Calu3 (cell line): ENCODE measurements at regions of chr6 and their contacts with region 1.

Region 1: GRCh38 chr6:132391391-132392271 is 9.6 kb downstream of the MOXD1 start:
- DNase-seq: no peak
- H3K4me3 Mint-ChIP-seq: no peak overlapping the region
- H3K27ac Mint-ChIP-seq: no peak overlapping the region
- H3K4me1 Mint-ChIP-seq: peaks cover 26% of the 10 kb centered on the region
- H3K27me3 Mint-ChIP-seq: no peaks in the 10 kb centered on the region
- CTCF ChIP-seq: no peak

Region 2: GRCh38 chr6:131909408-131910218 is 482.0 kb before region 1 on chr6:
- CTCF ChIA-PET with region 1: no interaction called
- intact Hi-C with region 1: loop called (anchors 10 kb)
- DNase-seq: peak; percentile 84
- H3K4me3 Mint-ChIP-seq: no peak overlapping the region
- H3K27ac Mint-ChIP-seq: no peak overlapping the region
- H3K4me1 Mint-ChIP-seq: no peaks in the 10 kb centered on the region
- H3K27me3 Mint-ChIP-seq: peaks cover 11% of the 10 kb centered on the region
- CTCF ChIP-seq: peak; percentile 80

Region 3: DNA sequence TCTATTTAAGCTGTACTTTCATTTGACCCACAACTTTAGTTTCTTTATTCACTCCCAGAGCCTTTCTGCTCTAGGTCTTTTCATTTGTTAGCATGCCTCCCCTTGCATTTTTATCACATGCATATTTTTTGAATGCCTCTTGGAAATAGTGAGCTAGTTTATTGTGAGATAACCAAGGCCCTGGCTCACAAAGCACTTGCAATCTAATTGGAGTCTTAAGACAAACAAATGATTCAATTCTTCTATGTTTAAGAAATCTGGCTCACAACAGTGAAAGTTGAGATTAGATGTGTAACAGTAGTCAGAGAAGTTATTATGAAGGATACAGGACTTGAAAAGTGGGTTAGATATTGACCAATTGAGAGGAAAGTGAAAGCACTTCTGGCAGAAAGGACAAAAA is 163.7 kb before region 1 on chr6:
- CTCF ChIA-PET with region 1: no interaction called
- intact Hi-C with region 1: no loop called
- DNase-seq: no peak
- H3K4me3 Mint-ChIP-seq: no peak overlapping the region
- H3K27ac Mint-ChIP-seq: no peak overlapping the region
- H3K4me1 Mint-ChIP-seq: no peaks in the 10 kb centered on the region
- H3K27me3 Mint-ChIP-seq: no peaks in the 10 kb centered on the region
- CTCF ChIP-seq: no peak

Region 4: GRCh38 chr6:132300323-132300949 is 91.2 kb before region 1 on chr6:
- CTCF ChIA-PET with region 1: interaction called, 8 read pairs
- intact Hi-C with region 1: loop called (anchors 1 kb)
- DNase-seq: peak; percentile 58
- H3K4me3 Mint-ChIP-seq: no peak overlapping the region
- H3K27ac Mint-ChIP-seq: no peak overlapping the region
- H3K4me1 Mint-ChIP-seq: no peaks in the 10 kb centered on the region
- H3K27me3 Mint-ChIP-seq: no peaks in the 10 kb centered on the region
- CTCF ChIP-seq: peak; percentile 57

Region 5: GRCh38 chr6:132354512-132355167 is 37.0 kb before region 1 on chr6:
- CTCF ChIA-PET with region 1: no interaction called
- intact Hi-C with region 1: no loop called
- DNase-seq: no peak
- H3K4me3 Mint-ChIP-seq: no peak overlapping the region
- H3K27ac Mint-ChIP-seq: no peak overlapping the region
- H3K4me1 Mint-ChIP-seq: no peaks in the 10 kb centered on the region
- H3K27me3 Mint-ChIP-seq: no peaks in the 10 kb centered on the region
- CTCF ChIP-seq: no peak

Region 6: GRCh38 chr6:132483779-132484679 is 92.4 kb after region 1 on chr6:
- CTCF ChIA-PET with region 1: interaction called, 4 read pairs
- intact Hi-C with region 1: loop called (anchors 10 kb)
- DNase-seq: peak; percentile 46
- H3K4me3 Mint-ChIP-seq: no peak overlapping the region
- H3K27ac Mint-ChIP-seq: no peak overlapping the region
- H3K4me1 Mint-ChIP-seq: no peaks in the 10 kb centered on the region
- H3K27me3 Mint-ChIP-seq: no peaks in the 10 kb centered on the region
- CTCF ChIP-seq: peak; percentile 74